T-cell (primary cell): ENCODE measurements at regions of chr3 and their contacts with region 1.

Region 1: GRCh38 chr3:166372571-166373106 is 535.4 kb upstream of the BCHE start:
- DNase-seq: no peak
- ATAC-seq: no peak
- H3K4me3 ChIP-seq: no peak overlapping the region
- H3K4me3 Mint-ChIP-seq: no peak overlapping the region
- H3K27ac ChIP-seq: no peak overlapping the region
- H3K27ac Mint-ChIP-seq: no peak overlapping the region
- H3K4me1 ChIP-seq: no peaks in the 10 kb centered on the region
- H3K4me1 Mint-ChIP-seq: no peaks in the 10 kb centered on the region
- H3K27me3 ChIP-seq: no peaks in the 10 kb centered on the region
- H3K27me3 Mint-ChIP-seq: no peaks in the 10 kb centered on the region

Region 2: DNA sequence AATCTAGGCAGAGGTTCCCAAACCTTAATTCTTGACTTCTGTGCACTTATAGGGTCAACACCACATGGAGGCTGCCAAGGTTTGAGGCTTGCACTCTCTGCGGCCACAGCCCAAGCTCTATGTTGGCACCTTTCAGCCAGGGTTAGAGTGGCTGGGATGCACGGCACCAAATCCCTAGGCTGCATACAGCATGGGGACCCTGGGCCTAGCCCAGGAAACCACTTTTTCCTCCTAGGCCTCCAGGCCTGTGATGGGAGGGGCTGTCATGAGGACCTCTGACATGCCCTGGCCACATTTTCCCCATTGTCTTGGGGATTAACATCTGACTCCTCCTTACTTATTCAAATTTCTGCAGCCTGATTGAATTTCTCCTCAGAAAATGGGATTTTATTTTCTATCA is 1459.7 kb before region 1 on chr3:
- CTCF ChIA-PET with region 1: no interaction called
- POLR2A ChIA-PET with region 1: interaction called in 1 of 2 experiments, 16 read pairs
- DNase-seq: no peak
- ATAC-seq: no peak
- H3K4me3 ChIP-seq: no peak overlapping the region
- H3K4me3 Mint-ChIP-seq: no peak overlapping the region
- H3K27ac ChIP-seq: no peak overlapping the region
- H3K27ac Mint-ChIP-seq: no peak overlapping the region
- H3K4me1 ChIP-seq: no peaks in the 10 kb centered on the region
- H3K4me1 Mint-ChIP-seq: no peaks in the 10 kb centered on the region
- H3K27me3 ChIP-seq: no peaks in the 10 kb centered on the region
- H3K27me3 Mint-ChIP-seq: no peaks in the 10 kb centered on the region

Region 3: GRCh38 chr3:166360720-166361119 is 11.9 kb before region 1 on chr3:
- CTCF ChIA-PET with region 1: no interaction called
- POLR2A ChIA-PET with region 1: no interaction called
- DNase-seq: no peak
- ATAC-seq: no peak
- H3K4me3 ChIP-seq: no peak overlapping the region
- H3K4me3 Mint-ChIP-seq: no peak overlapping the region
- H3K27ac ChIP-seq: no peak overlapping the region
- H3K27ac Mint-ChIP-seq: no peak overlapping the region
- H3K4me1 ChIP-seq: no peaks in the 10 kb centered on the region
- H3K4me1 Mint-ChIP-seq: no peaks in the 10 kb centered on the region
- H3K27me3 ChIP-seq: no peaks in the 10 kb centered on the region
- H3K27me3 Mint-ChIP-seq: no peaks in the 10 kb centered on the region